HCT116 (cell line): ENCODE measurements at regions of chr15 and their contacts with region 1.

Region 1: DNA sequence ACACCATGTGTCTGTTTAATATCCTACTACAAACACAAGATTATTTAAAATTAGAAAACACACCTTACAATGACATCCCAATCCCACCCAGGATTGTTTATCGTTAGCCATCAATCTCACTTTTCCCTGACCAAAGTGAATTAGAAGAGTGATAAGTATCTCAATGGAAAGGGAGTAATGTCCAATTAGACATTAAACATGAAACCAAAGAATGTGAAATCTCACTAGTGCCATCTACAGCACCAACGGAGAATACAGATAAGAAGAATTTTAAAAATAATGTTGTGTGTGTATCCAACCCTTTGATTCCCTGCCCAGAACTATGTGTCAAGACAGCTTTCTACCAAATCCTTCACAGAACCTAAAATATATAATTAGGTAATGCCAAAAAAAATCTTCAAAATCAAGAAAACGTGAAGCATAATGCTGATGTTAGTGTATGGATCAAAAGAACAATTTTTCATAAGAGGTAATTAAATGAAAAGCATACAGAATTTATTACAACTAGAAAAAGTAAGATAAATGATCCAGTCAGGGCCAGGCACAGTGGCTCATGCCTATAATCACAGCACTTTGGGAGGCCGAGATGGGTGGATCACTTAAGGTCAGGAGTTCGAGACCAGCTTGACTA is 64.2 kb downstream of the SCAPER start:
- DNase-seq: peak; percentile 8
- ATAC-seq: peak; percentile 75
- H3K4me3 ChIP-seq: no peak overlapping the region
- H3K27ac ChIP-seq: no peak overlapping the region
- H3K4me1 ChIP-seq: no peaks in the 10 kb centered on the region
- H3K27me3 ChIP-seq: no peaks in the 10 kb centered on the region
- CTCF ChIP-seq: peak; percentile 43 to 60 (median 56); a peak in 5 of 6 replicates
- POLR2A ChIP-seq: no peak
- RAD21 ChIP-seq: peak; percentile 55

Region 2: DNA sequence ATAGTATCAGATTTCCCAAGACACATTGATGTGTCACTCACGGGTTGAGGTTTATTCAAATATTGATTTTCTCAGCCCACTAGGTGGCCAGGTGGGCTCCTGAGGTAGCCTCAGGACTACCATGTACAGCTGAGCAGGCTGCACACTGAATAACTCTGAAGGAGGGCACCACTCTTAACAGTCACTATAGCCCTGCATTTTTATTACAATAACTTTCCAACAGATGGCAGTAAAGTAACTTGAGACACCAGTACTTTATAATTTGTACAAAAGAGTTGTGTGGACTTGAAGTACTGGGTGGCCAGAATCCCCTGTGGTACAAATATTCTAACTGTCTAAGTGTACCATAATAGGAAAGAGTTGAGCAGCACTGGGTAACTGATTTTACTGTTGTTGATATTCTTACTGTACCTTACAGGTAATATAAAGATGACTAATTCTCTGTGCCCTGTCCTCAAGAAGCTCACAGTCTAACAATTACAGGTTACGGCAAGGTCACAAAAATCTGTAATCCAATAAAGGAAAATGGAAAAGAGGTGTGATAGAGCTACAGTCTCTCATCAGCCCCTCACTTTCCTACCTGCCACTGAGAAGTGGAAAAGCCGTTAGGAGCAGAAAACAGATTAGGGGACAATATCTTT is 605.6 kb before region 1 on chr15:
- CTCF ChIA-PET with region 1: no interaction called
- POLR2A ChIA-PET with region 1: no interaction called
- RAD21 ChIA-PET with region 1: no interaction called
- intact Hi-C with region 1: loop called (anchors 5 kb)
- DNase-seq: peak; percentile 19
- ATAC-seq: peak; percentile 96
- H3K4me3 ChIP-seq: no peak overlapping the region
- H3K27ac ChIP-seq: no peak overlapping the region
- H3K4me1 ChIP-seq: no peaks in the 10 kb centered on the region
- H3K27me3 ChIP-seq: no peaks in the 10 kb centered on the region
- CTCF ChIP-seq: peak; percentile 40 to 60 (median 57); a peak in 4 of 6 replicates
- POLR2A ChIP-seq: no peak
- RAD21 ChIP-seq: peak; percentile 65

Region 3: GRCh38 chr15:76336254-76337058 is 504.5 kb before region 1 on chr15 and contains the start of gene ISL2:
- CTCF ChIA-PET with region 1: no interaction called
- POLR2A ChIA-PET with region 1: interaction called, 3 read pairs
- RAD21 ChIA-PET with region 1: no interaction called
- intact Hi-C with region 1: loop called (anchors 10 kb)
- DNase-seq: peak; percentile 94
- ATAC-seq: peak; percentile 92
- H3K4me3 ChIP-seq: peak within 1 kb of the TSS; percentile 66 to 77
- H3K27ac ChIP-seq: peak within 1 kb of the TSS; percentile 70
- H3K4me1 ChIP-seq: peaks cover 10 to 25% of the 10 kb centered on the region in 2 experiments; a peak in 3 of 4 replicates
- H3K27me3 ChIP-seq: no peaks in the 10 kb centered on the region
- CTCF ChIP-seq: no peak
- POLR2A ChIP-seq: peak; percentile 93
- RAD21 ChIP-seq: no peak
- total RNA-seq, gene ISL2: 11.6 TPM

Region 4: DNA sequence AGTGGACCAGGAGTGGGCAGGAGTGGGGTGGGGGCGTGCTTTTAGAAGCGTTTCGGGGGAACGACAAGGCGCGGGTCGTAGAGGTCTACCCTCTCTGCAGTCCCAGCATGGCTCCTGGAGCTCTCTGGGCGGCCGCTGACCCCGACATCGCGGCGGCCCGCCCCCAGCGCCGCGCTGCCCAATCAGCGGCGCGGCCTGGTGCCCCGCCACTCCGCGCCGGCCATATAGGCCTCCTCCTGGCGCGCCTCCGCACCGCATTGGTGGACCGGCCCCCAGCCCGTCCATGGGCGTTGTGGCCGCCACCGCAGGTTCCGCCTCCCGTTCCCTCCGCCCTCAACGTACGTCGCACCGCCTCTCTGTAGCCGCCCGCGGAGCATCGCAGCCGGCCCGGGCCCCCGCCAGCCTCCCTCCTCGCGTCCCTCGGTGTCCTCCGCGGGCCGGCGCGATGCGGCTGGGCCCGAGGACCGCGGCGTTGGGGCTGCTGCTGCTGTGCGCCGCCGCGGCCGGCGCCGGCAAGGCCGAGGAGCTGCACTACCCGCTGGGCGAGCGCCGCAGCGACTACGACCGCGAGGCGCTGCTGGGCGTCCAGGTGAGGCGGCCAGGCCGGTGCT is 90.6 kb after region 1 on chr15 and contains the start of gene RCN2:
- CTCF ChIA-PET with region 1: no interaction called
- POLR2A ChIA-PET with region 1: no interaction called
- RAD21 ChIA-PET with region 1: no interaction called
- intact Hi-C with region 1: no loop called
- DNase-seq: peak; percentile 81
- ATAC-seq: peak; percentile 99
- H3K4me3 ChIP-seq: peak within 1 kb of the TSS; percentile 81 to 83
- H3K27ac ChIP-seq: peak within 1 kb of the TSS; percentile 65
- H3K4me1 ChIP-seq: peaks cover 5 to 7% of the 10 kb centered on the region in 2 experiments; a peak in 2 of 4 replicates
- H3K27me3 ChIP-seq: no peaks in the 10 kb centered on the region
- CTCF ChIP-seq: no peak
- POLR2A ChIP-seq: peak; percentile 68
- RAD21 ChIP-seq: no peak
- total RNA-seq, gene RCN2: 71.5 TPM